Dorsolateral prefrontal cortex (tissue), 120 donors: ENCODE measurements at regions of chr17 and their contacts with region 1.

Region 1: GRCh38 chr17:73311781-73312641 is at the start of gene CDC42EP4:
- DNase-seq: peak; percentile 89 to 97 (median 95)
- H3K4me3 ChIP-seq: peak within 1 kb of the TSS; percentile 52 to 100 (median 97)
- H3K27ac ChIP-seq: peak within 1 kb of the TSS; percentile 73 to 99 (median 96)
- H3K27me3 ChIP-seq: no peaks in the 10 kb centered on the region
- CTCF ChIP-seq: peak in 17 of 56 donors; percentile 6 to 45 (median 19)
- total RNA-seq, gene CDC42EP4: 47.4 to 222 (median 76.7) TPM

Region 2: GRCh38 chr17:72943826-72944689 is 368.0 kb before region 1 on chr17:
- intact Hi-C with region 1: no loop called
- DNase-seq: peak in 1 of 10 donors; percentile 53
- H3K4me3 ChIP-seq: no peak overlapping the region
- H3K27ac ChIP-seq: peak overlapping the region in 44 of 59 donors; percentile 7 to 76 (median 48)
- H3K27me3 ChIP-seq: no peaks in the 10 kb centered on the region
- CTCF ChIP-seq: no peak

Region 3: DNA sequence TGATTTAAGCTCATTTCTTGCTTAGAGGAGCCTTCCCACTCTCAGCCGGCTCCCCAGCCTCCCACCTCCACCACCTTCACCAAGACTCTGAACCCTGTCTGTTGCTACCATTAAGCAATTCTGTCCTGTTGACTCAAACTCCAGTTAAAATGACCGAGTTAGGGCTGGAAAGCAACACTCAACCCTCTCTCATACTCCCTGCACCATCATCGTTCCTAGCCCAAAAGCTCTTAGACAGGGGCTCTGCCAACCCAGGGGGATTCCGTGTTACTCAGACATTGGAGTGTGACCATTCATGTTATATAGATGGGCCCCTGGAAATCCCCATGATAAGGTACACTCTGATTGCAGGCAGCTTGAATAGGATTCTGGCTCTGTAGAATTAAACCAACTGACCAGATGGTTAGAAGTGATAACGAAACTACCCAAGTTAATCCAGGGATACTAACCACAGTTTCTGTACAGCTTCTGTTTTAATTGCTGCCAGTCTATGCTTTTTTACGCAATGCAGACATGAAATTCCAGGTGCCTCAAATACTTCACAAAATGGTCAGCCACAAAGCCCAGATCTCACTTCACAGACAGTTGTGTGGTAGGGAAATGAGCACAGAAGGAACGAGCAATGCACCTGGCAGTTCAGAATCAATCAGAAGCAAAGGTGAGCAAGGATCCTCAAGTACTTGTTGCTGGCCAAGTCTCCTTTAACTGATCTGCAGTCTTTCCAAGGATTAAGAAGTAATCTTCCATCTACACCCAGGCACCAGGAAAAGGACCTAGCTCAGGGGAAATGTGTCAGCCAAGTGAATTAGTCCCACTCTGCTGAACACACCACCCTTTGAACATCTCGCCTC is 145.1 kb before region 1 on chr17:
- intact Hi-C with region 1: no loop called
- DNase-seq: no peak
- H3K4me3 ChIP-seq: peak overlapping the region in 56 of 59 donors; percentile 36 to 79 (median 65)
- H3K27ac ChIP-seq: peak overlapping the region in 33 of 59 donors; percentile 0 to 85 (median 60)
- H3K27me3 ChIP-seq: peaks cover 0 to 35% (median 5%) of the 10 kb centered on the region in 45 donors
- CTCF ChIP-seq: no peak

Region 4: GRCh38 chr17:73255671-73256181 is 56.3 kb before region 1 on chr17:
- intact Hi-C with region 1: loop called (anchors 2 kb)
- DNase-seq: peak in 8 of 10 donors; percentile 61 to 78 (median 71)
- H3K4me3 ChIP-seq: peak overlapping the region in 1 of 59 donors; percentile 12
- H3K27ac ChIP-seq: peak overlapping the region in 2 of 59 donors; percentile 24 to 26
- H3K27me3 ChIP-seq: no peaks in the 10 kb centered on the region
- CTCF ChIP-seq: peak; percentile 94 to 100 (median 99)

Region 5: DNA sequence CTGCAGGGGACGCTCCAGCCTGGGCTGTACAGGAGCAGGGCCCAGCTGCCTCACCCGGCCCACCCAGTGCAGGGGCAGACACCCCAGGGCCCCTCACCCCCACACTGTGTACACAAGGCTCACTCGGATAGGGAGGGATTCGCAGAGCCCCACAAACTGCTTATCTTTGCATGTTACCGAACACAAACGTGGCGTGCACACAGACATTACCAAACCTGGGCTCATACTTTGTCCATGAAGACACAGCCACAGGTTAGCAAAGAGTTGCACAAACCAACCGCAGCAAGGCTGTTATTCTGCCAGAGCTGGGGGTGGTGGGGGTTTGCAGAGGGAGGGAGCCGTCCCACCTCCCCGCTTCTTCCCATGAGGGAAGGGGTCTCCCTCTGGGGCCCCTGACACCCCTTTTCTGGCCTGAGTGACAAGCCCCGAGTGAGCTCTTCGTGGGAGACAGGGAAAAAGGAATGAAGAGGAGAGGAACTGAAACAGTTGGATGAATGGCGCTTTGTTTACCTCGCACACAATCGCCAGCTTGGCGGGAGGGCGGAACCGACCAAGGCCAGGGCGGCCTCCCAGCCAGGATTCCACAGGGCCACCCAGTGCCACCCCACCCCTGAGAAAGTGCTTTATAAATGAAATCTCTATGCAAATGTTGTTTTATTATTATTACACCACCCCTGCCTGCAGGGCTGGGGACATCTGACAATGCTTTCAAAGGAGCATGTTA is 49.9 kb before region 1 on chr17:
- intact Hi-C with region 1: loop called in 1 of 2 experiments (anchors 2 kb)
- DNase-seq: peak in 9 of 10 donors; percentile 59 to 81 (median 72)
- H3K4me3 ChIP-seq: peak overlapping the region in 23 of 59 donors; percentile 0 to 46 (median 17)
- H3K27ac ChIP-seq: peak overlapping the region in 44 of 59 donors; percentile 8 to 79 (median 56)
- H3K27me3 ChIP-seq: no peaks in the 10 kb centered on the region
- CTCF ChIP-seq: peak in 6 of 56 donors; percentile 14 to 29 (median 16)

Region 6: GRCh38 chr17:73342050-73342522 is 30.1 kb after region 1 on chr17:
- intact Hi-C with region 1: loop called (anchors 1 to 5 kb)
- DNase-seq: peak; percentile 39 to 95 (median 93)
- H3K4me3 ChIP-seq: peak overlapping the region in 22 of 59 donors; percentile 2 to 53 (median 30)
- H3K27ac ChIP-seq: peak overlapping the region in 57 of 59 donors; percentile 66 to 97 (median 89)
- H3K27me3 ChIP-seq: no peaks in the 10 kb centered on the region
- CTCF ChIP-seq: peak in 3 of 56 donors; percentile 10 to 23 (median 18)

Region 7: GRCh38 chr17:73349138-73349537 is 37.1 kb after region 1 on chr17:
- intact Hi-C with region 1: loop called in 1 of 2 experiments (anchors 5 kb)
- DNase-seq: peak in 6 of 10 donors; percentile 52 to 70 (median 66)
- H3K4me3 ChIP-seq: peak overlapping the region in 1 of 59 donors; percentile 16
- H3K27ac ChIP-seq: peak overlapping the region; percentile 22 to 91 (median 79)
- H3K27me3 ChIP-seq: no peaks in the 10 kb centered on the region
- CTCF ChIP-seq: peak in 1 of 56 donors; percentile 17

Region 8: DNA sequence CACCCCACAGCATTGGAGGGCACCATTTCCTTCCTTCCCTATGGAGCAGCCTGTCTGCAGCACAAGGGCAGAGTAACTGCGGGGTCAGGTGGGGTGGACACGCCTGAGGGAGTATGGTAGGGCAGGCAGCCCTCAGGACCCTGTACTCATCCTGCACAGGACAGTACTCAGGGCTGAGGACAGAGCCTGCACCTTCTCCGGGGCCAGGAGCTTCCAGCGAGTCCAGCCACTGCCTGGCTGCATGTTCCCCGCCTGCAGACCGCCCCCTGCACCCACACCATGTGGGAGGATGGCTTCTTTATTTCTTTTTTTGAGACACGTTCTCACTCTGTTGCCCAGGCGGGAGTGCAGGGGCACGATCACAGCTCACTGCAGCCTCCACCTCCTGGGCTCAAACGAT is 47.3 kb after region 1 on chr17:
- intact Hi-C with region 1: no loop called
- DNase-seq: no peak
- H3K4me3 ChIP-seq: no peak overlapping the region
- H3K27ac ChIP-seq: peak overlapping the region in 3 of 59 donors; percentile 18 to 48 (median 22)
- H3K27me3 ChIP-seq: no peaks in the 10 kb centered on the region
- CTCF ChIP-seq: no peak

Region 9: GRCh38 chr17:73371285-73371684 is 59.3 kb after region 1 on chr17:
- intact Hi-C with region 1: loop called (anchors 2 kb)
- DNase-seq: no peak
- H3K4me3 ChIP-seq: no peak overlapping the region
- H3K27ac ChIP-seq: no peak overlapping the region
- H3K27me3 ChIP-seq: no peaks in the 10 kb centered on the region
- CTCF ChIP-seq: no peak